HepG2 (cell line): ENCODE measurements at regions of chr16 and their contacts with region 1.

Region 1: DNA sequence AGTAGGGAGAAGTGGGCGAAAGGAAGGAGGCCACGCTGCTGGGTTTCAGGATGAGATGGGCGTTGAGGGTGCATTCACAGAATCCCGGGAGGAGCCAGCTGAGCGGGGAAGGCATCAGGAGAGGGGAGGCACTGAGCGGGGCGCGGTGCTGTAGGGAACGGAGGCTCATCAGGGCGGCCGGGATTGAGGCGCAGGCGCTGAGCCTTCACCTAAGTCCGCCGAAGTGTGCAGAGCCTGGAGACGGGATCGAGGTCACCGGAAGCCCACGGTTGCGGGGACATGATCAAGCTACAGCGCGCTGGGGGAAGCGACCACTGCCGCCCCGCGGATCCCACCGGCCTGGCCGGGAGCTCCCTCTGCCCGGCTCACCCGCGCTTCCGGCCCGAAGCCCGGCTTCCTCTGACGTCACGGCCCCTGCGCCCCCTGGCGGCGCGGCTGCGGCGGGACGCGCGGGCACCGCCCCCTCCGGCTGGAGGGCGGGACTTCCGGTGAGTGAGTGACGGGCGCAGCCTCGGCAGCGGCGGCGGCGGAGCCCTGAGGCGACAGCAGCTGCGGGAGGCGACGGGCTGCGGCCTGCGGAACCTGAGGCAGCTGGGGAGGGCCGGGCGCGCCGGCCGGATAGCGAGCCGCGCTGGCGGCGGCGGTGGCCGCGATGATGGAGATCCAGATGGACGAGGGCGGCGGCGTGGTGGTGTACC is at the start of gene MAPK8IP3:
- DNase-seq: peak; percentile 74
- ATAC-seq: peak; percentile 90
- H3K4me3 ChIP-seq: peak within 1 kb of the TSS; percentile 84 to 100 (median 99)
- H3K27ac ChIP-seq: peak within 1 kb of the TSS; percentile 85
- H3K4me1 ChIP-seq: peaks cover 43% of the 10 kb centered on the region
- H3K27me3 ChIP-seq: no peaks in the 10 kb centered on the region; a peak in 1 of 5 replicates
- CTCF ChIP-seq: peak; percentile 86
- EP300 ChIP-seq: peak in 1 of 2 experiments; percentile 42; a peak in 2 of 4 replicates
- POLR2A ChIP-seq: peak; percentile 87 to 99
- RAD21 ChIP-seq: peak; percentile 78
- total RNA-seq, gene MAPK8IP3: 3.6 and 25.1 TPM in 2 replicates

Region 2: DNA sequence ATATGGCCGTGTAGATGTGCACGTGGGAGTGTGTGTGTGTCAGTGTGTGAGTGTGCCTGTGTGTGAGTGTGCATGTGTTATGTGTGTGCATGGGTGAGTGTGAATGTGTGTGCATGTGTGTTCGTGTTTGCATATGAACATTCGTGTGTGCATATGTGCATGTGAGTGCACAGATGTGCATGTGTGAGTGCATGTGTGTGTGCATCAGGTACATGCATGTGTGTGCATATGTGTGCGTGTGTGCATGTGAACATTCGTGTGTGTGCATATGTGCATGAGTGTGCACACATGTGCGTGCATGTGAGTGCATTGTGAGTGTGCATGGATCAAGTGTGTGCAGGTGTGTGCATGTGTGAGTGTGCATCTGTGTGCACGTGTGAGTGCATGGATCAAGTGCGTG is 467.8 kb before region 1 on chr16:
- CTCF ChIA-PET with region 1: no interaction called
- POLR2A ChIA-PET with region 1: no interaction called
- in situ Hi-C with region 1: no loop called
- intact Hi-C with region 1: no loop called
- DNase-seq: no peak
- ATAC-seq: no peak
- H3K4me3 ChIP-seq: no peak overlapping the region
- H3K27ac ChIP-seq: no peak overlapping the region
- H3K4me1 ChIP-seq: no peaks in the 10 kb centered on the region
- H3K27me3 ChIP-seq: peaks cover 3 to 5% of the 10 kb centered on the region in 2 experiments; a peak in 2 of 5 replicates
- CTCF ChIP-seq: no peak
- EP300 ChIP-seq: no peak
- POLR2A ChIP-seq: no peak
- RAD21 ChIP-seq: no peak

Region 3: DNA sequence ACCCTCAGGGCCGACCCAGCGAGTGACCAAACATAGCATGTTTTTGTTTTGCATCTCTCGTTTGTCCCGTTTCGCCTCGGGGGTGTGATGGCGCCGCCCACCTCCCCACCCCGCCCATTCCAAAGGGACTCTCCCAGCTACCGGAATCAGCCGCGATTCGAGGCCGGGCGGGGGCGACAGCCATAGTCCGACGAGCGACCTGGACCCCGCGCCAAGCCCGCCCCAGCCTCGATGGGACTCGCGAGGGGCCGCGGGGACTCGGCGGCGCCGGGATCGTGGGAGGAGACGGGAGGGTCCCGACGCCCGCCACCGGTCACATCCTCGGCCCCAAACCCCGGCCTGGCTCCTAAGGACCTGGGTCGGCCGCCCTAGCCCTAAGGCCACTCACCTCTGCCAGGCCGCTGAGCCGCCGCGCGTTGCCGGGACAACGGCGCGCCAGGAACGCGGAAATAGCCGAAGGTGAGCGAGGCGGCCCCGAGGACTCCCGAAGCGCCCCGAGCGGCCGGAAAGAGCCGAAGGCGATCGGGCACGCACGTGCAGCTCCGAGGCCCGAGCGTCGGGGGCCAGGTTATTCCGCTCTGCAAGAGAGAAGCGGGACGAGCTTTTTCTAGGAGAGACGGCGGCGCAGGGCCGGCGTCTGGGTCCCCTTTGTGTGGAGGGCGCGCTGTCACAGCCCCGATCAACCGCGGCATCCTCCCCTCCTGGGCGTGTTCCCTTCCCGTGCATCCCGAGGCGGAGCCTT is 95.4 kb before region 1 on chr16:
- CTCF ChIA-PET with region 1: no interaction called
- POLR2A ChIA-PET with region 1: interaction called, 8 read pairs
- in situ Hi-C with region 1: no loop called
- intact Hi-C with region 1: loop called (anchors 10 kb)
- DNase-seq: peak; percentile 81
- ATAC-seq: peak; percentile 85
- H3K4me3 ChIP-seq: peak overlapping the region; percentile 66 to 81 (median 70)
- H3K27ac ChIP-seq: peak overlapping the region; percentile 81
- H3K4me1 ChIP-seq: peaks cover 24% of the 10 kb centered on the region
- H3K27me3 ChIP-seq: no peaks in the 10 kb centered on the region; a peak in 1 of 5 replicates
- CTCF ChIP-seq: peak; percentile 48
- EP300 ChIP-seq: no peak
- POLR2A ChIP-seq: peak; percentile 30 to 58
- RAD21 ChIP-seq: no peak

Region 4: DNA sequence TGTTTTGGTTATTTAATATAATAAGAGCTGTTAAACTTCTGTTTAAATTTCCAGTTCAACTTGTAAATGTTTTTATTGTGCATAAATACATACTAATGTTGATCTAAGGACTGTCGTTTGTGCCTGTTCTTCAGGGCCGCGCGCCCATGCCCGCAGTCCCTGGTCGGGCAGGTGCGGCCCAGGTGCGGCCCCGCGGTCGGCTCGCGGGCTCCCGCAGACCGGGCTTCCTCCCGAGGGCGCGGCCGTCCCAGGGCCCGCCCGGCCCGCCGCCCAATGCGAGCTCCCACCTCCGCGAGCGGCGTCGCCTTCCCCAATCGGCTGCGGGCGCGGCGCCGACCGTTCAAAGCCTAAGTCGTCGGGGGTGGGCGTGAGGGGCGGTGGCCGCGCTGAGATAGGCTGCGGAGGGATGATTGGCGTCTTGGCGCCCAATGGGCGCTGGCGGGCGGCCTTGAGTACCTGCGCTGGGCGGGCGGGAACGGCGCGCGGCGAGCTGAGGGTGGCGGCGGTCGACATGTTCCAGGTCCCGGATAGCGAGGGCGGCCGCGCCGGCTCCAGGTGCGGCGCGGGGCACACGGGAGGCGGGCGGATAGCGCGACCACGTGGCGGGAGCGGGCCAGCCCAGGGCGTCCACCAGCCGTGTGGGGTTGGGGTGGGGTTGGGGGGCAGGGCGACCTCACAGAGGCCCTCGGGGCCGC is 27.9 kb before region 1 on chr16 and contains the start of gene JPT2:
- CTCF ChIA-PET with region 1: no interaction called
- POLR2A ChIA-PET with region 1: interaction called, 37 read pairs
- in situ Hi-C with region 1: no loop called
- intact Hi-C with region 1: no loop called
- DNase-seq: peak; percentile 93
- ATAC-seq: peak; percentile 97
- H3K4me3 ChIP-seq: peak within 1 kb of the TSS; percentile 79 to 96 (median 95)
- H3K27ac ChIP-seq: peak within 1 kb of the TSS; percentile 77
- H3K4me1 ChIP-seq: peaks cover 36% of the 10 kb centered on the region
- H3K27me3 ChIP-seq: no peaks in the 10 kb centered on the region; a peak in 1 of 5 replicates
- CTCF ChIP-seq: no peak
- EP300 ChIP-seq: no peak
- POLR2A ChIP-seq: peak; percentile 45 to 77; a peak in 3 of 4 replicates
- RAD21 ChIP-seq: no peak
- total RNA-seq, gene JPT2: 89.4 and 127 TPM in 2 replicates